ENCODE measurements at regions of chr10 and their contacts with region 1.

Region 1: GRCh38 chr10:29386342-29386999 is 97.6 kb downstream of the LYZL1 start:
- DNase-seq: no peak
- ATAC-seq: peak; percentile 30 to 79 (median 54)
- H3K4me3 ChIP-seq: no peak overlapping the region
- H3K27ac ChIP-seq: no peak overlapping the region
- H3K4me1 ChIP-seq: no peaks in the 10 kb centered on the region
- H3K27me3 ChIP-seq: no peaks in the 10 kb centered on the region
- CTCF ChIP-seq: peak; percentile 79

Region 2: DNA sequence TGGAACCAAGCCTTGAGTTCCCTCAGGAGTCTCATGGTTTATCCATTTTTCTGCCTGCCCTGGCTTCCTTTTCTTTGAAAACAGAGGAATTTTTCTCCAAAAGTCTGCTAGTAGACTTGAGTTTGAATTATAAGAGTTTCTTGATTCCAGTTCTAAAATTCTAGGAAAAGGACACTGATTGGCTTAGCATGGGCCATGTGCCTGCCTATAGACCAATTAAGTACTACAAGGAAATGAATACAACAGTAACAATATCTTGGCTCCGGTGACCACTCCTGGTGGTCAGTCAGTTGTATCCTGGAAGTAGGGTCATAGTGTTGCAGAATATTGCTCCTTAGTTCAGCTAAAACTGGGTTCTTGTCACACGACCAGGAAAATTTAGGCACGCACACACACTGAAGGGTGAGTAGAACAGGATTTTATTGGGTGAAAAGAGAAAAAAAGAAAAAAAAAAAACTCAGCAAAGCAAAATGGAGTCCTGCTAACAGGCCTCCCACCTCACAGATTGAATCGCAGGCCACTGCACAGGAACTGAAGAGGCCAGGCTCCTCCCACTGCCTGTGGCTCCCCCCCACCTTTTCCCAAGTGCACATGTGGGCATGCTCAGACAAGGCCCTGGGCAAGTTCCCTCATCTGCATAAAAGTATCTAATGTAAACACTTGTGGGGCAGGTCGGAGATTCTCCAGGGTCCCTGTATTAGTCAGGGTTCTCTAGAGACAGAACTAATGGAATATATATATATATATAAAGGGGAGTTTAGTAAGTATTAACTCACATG is 57.5 kb after region 1 on chr10:
- intact Hi-C with region 1: loop called (anchors 2 kb)
- DNase-seq: no peak
- ATAC-seq: no peak
- H3K4me3 ChIP-seq: no peak overlapping the region
- H3K27ac ChIP-seq: no peak overlapping the region
- H3K4me1 ChIP-seq: peaks cover 10% of the 10 kb centered on the region
- H3K27me3 ChIP-seq: no peaks in the 10 kb centered on the region
- CTCF ChIP-seq: no peak

Region 3: GRCh38 chr10:29451946-29452345 is 65.5 kb after region 1 on chr10:
- intact Hi-C with region 1: loop called (anchors 2 kb)
- DNase-seq: no peak
- ATAC-seq: no peak
- H3K4me3 ChIP-seq: no peak overlapping the region
- H3K27ac ChIP-seq: no peak overlapping the region
- H3K4me1 ChIP-seq: peaks cover 14% of the 10 kb centered on the region
- H3K27me3 ChIP-seq: no peaks in the 10 kb centered on the region
- CTCF ChIP-seq: no peak